Astrocyte of the cerebellum (primary cell): ENCODE measurements at regions of chr3 and their contacts with region 1.

Region 1: GRCh38 chr3:185094697-185095096 is 58.2 kb downstream of the C3orf70 start:
- DNase-seq: no peak
- H3K4me3 ChIP-seq: no peak overlapping the region
- CTCF ChIP-seq: no peak

Region 2: GRCh38 chr3:184982076-184982475 is 112.6 kb before region 1 on chr3:
- in situ Hi-C with region 1: no loop called
- DNase-seq: no peak
- H3K4me3 ChIP-seq: no peak overlapping the region
- CTCF ChIP-seq: no peak

Region 3: GRCh38 chr3:185021256-185021655 is 73.4 kb before region 1 on chr3:
- in situ Hi-C with region 1: no loop called
- DNase-seq: no peak
- H3K4me3 ChIP-seq: no peak overlapping the region
- CTCF ChIP-seq: no peak

Region 4: DNA sequence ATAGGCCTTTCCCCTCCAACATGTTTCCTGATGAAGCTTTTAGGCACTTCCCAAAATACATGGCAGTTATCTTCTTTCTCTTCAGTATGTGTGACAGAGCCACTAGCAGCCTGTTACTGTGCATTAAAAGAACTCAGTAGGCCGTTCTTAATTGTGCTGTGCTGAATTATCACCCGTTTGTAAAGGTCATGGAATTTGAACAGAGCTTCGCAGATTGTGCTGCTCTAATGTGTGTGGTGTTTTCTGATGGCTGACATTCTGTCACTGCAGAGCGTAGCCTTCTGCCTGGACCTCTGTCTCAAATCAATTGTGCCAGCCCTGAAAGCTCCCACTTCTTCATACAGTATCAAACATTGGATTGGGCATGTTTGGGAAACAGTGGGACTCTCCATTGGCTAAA is 53.2 kb before region 1 on chr3:
- in situ Hi-C with region 1: no loop called
- DNase-seq: no peak
- H3K4me3 ChIP-seq: no peak overlapping the region
- CTCF ChIP-seq: no peak

Region 5: GRCh38 chr3:185149591-185149990 is 54.9 kb after region 1 on chr3:
- in situ Hi-C with region 1: loop called (anchors 5 kb)
- DNase-seq: no peak
- H3K4me3 ChIP-seq: no peak overlapping the region
- CTCF ChIP-seq: no peak